PC-9 (cell line): ENCODE measurements at regions of chr7 and their contacts with region 1.

Region 1: GRCh38 chr7:101153969-101154692 is at the start of gene AP1S1:
- DNase-seq: peak; percentile 83 to 92
- H3K4me3 ChIP-seq: peak within 1 kb of the TSS; percentile 84
- H3K27ac ChIP-seq: peak within 1 kb of the TSS; percentile 54
- H3K4me1 ChIP-seq: peaks cover 38% of the 10 kb centered on the region
- H3K27me3 ChIP-seq: no peaks in the 10 kb centered on the region
- CTCF ChIP-seq: no peak
- total RNA-seq, gene AP1S1: 227 and 308 TPM in 2 replicates

Region 2: DNA sequence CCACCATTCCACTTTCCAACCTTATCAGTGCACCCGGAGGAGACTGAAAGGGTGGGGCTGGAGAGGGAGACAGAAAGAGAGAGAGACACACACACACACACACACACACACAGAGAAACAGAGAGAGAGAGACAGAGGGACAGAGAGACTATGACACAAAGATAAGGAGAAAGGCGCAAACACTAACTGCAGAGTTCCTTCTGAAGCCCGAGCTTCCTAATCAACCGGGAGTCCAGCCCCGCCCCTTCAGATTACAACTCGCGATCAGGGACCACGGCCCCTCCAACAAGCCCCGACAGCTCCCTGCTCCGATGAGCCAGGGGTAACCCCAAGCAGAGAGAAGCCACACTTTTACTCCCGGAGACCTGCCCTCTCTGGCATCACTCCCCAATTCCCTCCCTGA is 986.2 kb before region 1 on chr7:
- CTCF ChIA-PET with region 1: interaction called, 13 read pairs
- POLR2A ChIA-PET with region 1: no interaction called
- intact Hi-C with region 1: no loop called
- DNase-seq: no peak
- H3K4me3 ChIP-seq: no peak overlapping the region
- H3K27ac ChIP-seq: no peak overlapping the region
- H3K4me1 ChIP-seq: peaks cover 10% of the 10 kb centered on the region
- H3K27me3 ChIP-seq: peaks cover 47% of the 10 kb centered on the region
- CTCF ChIP-seq: no peak